ENCODE measurements at regions of chr4 and their contacts with region 1.

Region 1: GRCh38 chr4:87838890-87839591 is 6.3 kb downstream of the MEPE start:
- DNase-seq: no peak
- ATAC-seq: peak; percentile 74
- H3K4me3 ChIP-seq: no peak overlapping the region
- H3K27ac ChIP-seq: no peak overlapping the region
- H3K4me1 ChIP-seq: no peaks in the 10 kb centered on the region
- H3K27me3 ChIP-seq: peaks cover under 1 to 21% of the 10 kb centered on the region in 2 experiments; a peak in 1 of 5 replicates
- CTCF ChIP-seq: peak; percentile 59
- EP300 ChIP-seq: no peak
- POLR2A ChIP-seq: no peak
- RAD21 ChIP-seq: no peak

Region 2: GRCh38 chr4:87614292-87614890 is 224.7 kb before region 1 on chr4:
- CTCF ChIA-PET with region 1: no interaction called
- POLR2A ChIA-PET with region 1: no interaction called
- in situ Hi-C with region 1: no loop called
- intact Hi-C with region 1: loop called (anchors 5 kb)
- DNase-seq: no peak
- ATAC-seq: no peak
- H3K4me3 ChIP-seq: no peak overlapping the region
- H3K27ac ChIP-seq: no peak overlapping the region
- H3K4me1 ChIP-seq: no peaks in the 10 kb centered on the region
- H3K27me3 ChIP-seq: no peaks in the 10 kb centered on the region
- CTCF ChIP-seq: no peak
- EP300 ChIP-seq: no peak
- POLR2A ChIP-seq: no peak
- RAD21 ChIP-seq: no peak

Region 3: DNA sequence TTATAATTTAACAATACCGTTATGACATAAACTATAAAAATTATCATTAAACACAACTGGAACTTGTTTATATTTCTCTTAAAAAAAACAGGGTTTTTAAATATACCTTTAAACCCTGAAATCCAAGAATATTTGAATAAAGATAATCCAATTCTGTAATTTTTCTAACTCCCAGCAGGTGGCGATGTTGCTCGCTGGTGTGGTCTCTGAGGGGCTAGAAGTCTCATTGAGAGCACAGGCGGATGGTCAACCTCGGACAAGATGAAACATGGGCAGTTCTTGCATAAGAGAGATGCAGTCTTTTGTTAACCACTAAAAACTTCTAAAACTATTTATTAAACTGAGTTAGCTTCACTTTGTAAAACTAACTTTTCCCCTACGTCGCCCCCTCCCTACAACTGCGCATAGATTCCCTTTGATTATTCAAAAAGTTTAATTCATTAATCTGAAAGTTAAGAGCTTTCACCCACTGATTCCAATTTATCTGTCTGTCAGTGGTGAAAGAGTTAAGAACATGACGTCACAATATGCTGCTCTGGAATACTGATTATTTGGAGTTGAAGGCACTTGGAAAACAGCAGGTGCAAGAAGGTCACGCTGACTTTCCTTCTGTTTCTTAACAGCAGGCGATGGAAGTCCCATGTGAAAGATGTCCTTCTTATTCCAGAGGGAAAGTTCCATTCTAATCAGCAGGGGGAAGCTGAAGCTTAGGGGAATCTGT is 159.4 kb before region 1 on chr4:
- CTCF ChIA-PET with region 1: interaction called, 39 read pairs
- POLR2A ChIA-PET with region 1: no interaction called
- in situ Hi-C with region 1: loop called (anchors 5 kb)
- intact Hi-C with region 1: loop called (anchors 1 kb)
- DNase-seq: peak; percentile 48
- ATAC-seq: peak; percentile 63
- H3K4me3 ChIP-seq: no peak overlapping the region
- H3K27ac ChIP-seq: no peak overlapping the region
- H3K4me1 ChIP-seq: no peaks in the 10 kb centered on the region
- H3K27me3 ChIP-seq: peaks cover 0 to 7% of the 10 kb centered on the region in 2 experiments; a peak in 2 of 5 replicates
- CTCF ChIP-seq: peak; percentile 78
- EP300 ChIP-seq: no peak
- POLR2A ChIP-seq: no peak
- RAD21 ChIP-seq: peak; percentile 48; the same call in 1 of the 2 replicates

Measured in HepG2 (cell line).